B cell (primary cell): ENCODE measurements at regions of chr6 and their contacts with region 1.

Region 1: GRCh38 chr6:117555882-117556498 is 46.3 kb downstream of the GOPC start:
- DNase-seq: peak; percentile 56
- ATAC-seq: no peak
- H3K4me3 ChIP-seq: no peak overlapping the region
- H3K4me3 Mint-ChIP-seq: no peak overlapping the region
- H3K27ac ChIP-seq: no peak overlapping the region
- H3K27ac Mint-ChIP-seq: no peak overlapping the region
- H3K4me1 ChIP-seq: peaks cover 0 to 5% of the 10 kb centered on the region in 2 donors
- H3K4me1 Mint-ChIP-seq: peaks cover 3% of the 10 kb centered on the region
- H3K27me3 ChIP-seq: no peaks in the 10 kb centered on the region
- H3K27me3 Mint-ChIP-seq: peaks cover 5% of the 10 kb centered on the region
- CTCF ChIP-seq: peak; percentile 99

Region 2: DNA sequence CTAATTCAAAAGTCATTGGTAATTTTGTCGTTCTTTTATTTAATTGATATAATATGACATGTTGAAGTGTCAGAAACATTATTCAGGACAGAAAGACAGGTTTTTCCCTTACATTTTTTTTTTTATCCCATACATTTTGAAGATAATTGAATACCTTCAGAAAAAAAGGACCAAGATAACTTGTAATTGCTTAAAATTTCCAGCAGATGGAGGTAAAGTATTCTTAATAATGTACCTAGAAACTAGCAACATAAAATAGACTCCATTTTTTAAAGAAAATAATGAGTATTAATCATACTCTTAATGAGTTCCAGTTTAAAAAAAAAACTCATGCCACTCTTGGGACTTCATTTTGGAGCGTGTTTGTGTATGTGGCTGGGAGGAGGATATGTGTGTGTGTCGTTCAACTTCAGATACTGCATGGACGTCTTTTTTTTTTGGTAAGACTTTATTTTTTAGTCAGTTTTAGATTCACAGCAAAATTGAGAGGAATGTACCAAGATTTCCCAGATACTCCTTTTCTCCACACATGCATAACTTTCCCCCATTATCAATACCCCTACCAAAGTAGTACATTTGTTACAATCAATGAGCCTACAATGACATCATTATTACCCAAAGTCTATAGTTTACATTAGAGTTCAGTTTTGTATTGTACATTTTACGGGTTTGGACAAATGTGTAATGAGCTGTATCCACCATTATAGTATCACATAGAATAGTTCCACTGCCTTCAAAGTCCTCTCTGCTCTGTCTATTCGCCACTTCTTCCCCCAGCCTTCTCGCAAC is 209.7 kb before region 1 on chr6:
- CTCF ChIA-PET with region 1: no interaction called
- POLR2A ChIA-PET with region 1: no interaction called
- intact Hi-C with region 1: loop called (anchors 1 kb)
- DNase-seq: peak; percentile 20
- ATAC-seq: no peak
- H3K4me3 ChIP-seq: no peak overlapping the region
- H3K4me3 Mint-ChIP-seq: no peak overlapping the region
- H3K27ac ChIP-seq: no peak overlapping the region
- H3K27ac Mint-ChIP-seq: no peak overlapping the region
- H3K4me1 ChIP-seq: no peaks in the 10 kb centered on the region
- H3K4me1 Mint-ChIP-seq: no peaks in the 10 kb centered on the region
- H3K27me3 ChIP-seq: no peaks in the 10 kb centered on the region
- H3K27me3 Mint-ChIP-seq: peaks cover 8% of the 10 kb centered on the region
- CTCF ChIP-seq: peak; percentile 85

Region 3: GRCh38 chr6:117449549-117450439 is 106.2 kb before region 1 on chr6:
- CTCF ChIA-PET with region 1: interaction called, 17 read pairs
- POLR2A ChIA-PET with region 1: no interaction called
- intact Hi-C with region 1: loop called (anchors 1 kb)
- DNase-seq: peak; percentile 63
- ATAC-seq: no peak
- H3K4me3 ChIP-seq: no peak overlapping the region
- H3K4me3 Mint-ChIP-seq: no peak overlapping the region
- H3K27ac ChIP-seq: no peak overlapping the region
- H3K27ac Mint-ChIP-seq: no peak overlapping the region
- H3K4me1 ChIP-seq: no peaks in the 10 kb centered on the region
- H3K4me1 Mint-ChIP-seq: no peaks in the 10 kb centered on the region
- H3K27me3 ChIP-seq: peaks cover 0 to 13% (median 5%) of the 10 kb centered on the region in 4 experiments
- H3K27me3 Mint-ChIP-seq: peaks cover 33% of the 10 kb centered on the region
- CTCF ChIP-seq: peak; percentile 79

Region 4: DNA sequence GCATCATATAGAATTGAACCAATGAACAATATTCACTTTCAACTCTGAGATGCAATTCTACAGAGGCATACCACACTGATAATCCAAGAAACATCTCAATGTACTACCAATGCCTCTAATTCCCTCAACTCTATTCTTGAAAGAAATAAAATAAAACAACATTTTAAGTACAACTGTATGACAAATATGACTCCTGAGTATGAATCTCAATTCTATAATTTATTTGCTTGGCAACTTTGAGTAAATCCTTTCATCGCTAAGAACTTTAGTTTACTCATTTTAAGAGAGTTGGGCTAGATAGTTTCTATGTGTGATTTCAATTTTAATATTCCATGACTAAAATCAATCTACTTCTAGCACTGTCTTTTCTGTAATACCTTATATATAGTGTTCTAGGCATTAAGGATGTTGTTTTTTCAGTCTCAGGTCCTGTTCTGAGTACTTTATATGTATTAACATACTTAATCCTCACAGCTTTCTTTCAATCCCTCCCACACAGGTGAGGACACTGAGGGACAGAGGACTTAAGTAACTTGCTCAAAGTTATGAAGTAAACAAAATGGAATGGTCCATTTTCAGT is 12.9 kb after region 1 on chr6:
- CTCF ChIA-PET with region 1: interaction called, 18 read pairs
- POLR2A ChIA-PET with region 1: no interaction called
- intact Hi-C with region 1: no loop called
- DNase-seq: no peak
- ATAC-seq: no peak
- H3K4me3 ChIP-seq: no peak overlapping the region
- H3K4me3 Mint-ChIP-seq: no peak overlapping the region
- H3K27ac ChIP-seq: no peak overlapping the region
- H3K27ac Mint-ChIP-seq: no peak overlapping the region
- H3K4me1 ChIP-seq: no peaks in the 10 kb centered on the region
- H3K4me1 Mint-ChIP-seq: no peaks in the 10 kb centered on the region
- H3K27me3 ChIP-seq: no peaks in the 10 kb centered on the region
- H3K27me3 Mint-ChIP-seq: no peaks in the 10 kb centered on the region
- CTCF ChIP-seq: no peak

Region 5: GRCh38 chr6:117992856-117993255 is 436.9 kb after region 1 on chr6:
- CTCF ChIA-PET with region 1: no interaction called
- POLR2A ChIA-PET with region 1: no interaction called
- intact Hi-C with region 1: no loop called
- DNase-seq: no peak
- ATAC-seq: no peak
- H3K4me3 ChIP-seq: no peak overlapping the region
- H3K4me3 Mint-ChIP-seq: no peak overlapping the region
- H3K27ac ChIP-seq: no peak overlapping the region
- H3K27ac Mint-ChIP-seq: no peak overlapping the region
- H3K4me1 ChIP-seq: no peaks in the 10 kb centered on the region
- H3K4me1 Mint-ChIP-seq: no peaks in the 10 kb centered on the region
- H3K27me3 ChIP-seq: peaks cover 0 to 3% (median 0%) of the 10 kb centered on the region in 4 experiments
- H3K27me3 Mint-ChIP-seq: peaks cover 4% of the 10 kb centered on the region
- CTCF ChIP-seq: no peak